ENCODE measurements at regions of chr3 and their contacts with region 1.

Region 1: DNA sequence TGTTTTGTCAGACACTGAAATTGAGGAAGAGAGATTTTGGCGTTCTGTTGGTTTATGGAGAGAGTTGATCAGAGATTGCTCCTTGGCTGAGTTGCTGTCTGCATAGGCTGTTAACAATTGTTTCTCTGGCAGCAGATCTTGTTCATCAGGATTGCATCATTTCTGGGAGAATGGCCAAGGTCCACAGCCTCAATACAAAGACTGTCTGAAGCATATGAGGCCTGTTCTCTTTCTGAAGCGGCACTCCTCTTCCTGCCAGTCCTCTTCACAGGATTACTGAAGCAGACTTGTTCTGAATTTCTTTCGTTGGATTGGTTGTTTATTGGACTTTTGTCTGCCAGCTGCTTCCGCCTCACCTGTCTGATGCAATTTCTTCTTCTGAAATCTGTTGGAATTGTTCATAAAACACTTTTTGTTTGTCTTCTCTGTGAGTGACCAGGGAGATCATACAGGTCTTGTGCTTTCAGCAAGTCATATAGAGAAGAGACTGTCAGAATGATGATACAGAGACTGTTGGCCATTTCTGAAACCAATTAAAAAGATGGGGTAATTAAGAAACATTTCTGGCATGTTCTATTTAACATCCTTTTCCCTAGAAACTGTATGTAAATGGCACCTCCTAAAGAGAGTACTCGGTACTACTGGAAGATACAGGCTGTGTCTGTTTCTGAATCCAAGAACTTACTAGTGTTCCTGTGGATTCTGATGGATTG is 25.5 kb downstream of the SETD5 start:
- DNase-seq: peak; percentile 25 to 50 (median 46)
- H3K4me3 ChIP-seq: no peak overlapping the region
- H3K4me3 Mint-ChIP-seq: no peak overlapping the region
- H3K27ac ChIP-seq: peak overlapping the region in 1 of 2 donors; percentile 73
- H3K27ac Mint-ChIP-seq: peak overlapping the region; percentile 70 to 89 (median 76)
- H3K4me1 ChIP-seq: peaks cover 6 to 10% of the 10 kb centered on the region in 2 donors
- H3K4me1 Mint-ChIP-seq: peaks cover 14% of the 10 kb centered on the region
- H3K27me3 ChIP-seq: no peaks in the 10 kb centered on the region
- H3K27me3 Mint-ChIP-seq: no peaks in the 10 kb centered on the region
- CTCF ChIP-seq: peak; percentile 76

Region 2: DNA sequence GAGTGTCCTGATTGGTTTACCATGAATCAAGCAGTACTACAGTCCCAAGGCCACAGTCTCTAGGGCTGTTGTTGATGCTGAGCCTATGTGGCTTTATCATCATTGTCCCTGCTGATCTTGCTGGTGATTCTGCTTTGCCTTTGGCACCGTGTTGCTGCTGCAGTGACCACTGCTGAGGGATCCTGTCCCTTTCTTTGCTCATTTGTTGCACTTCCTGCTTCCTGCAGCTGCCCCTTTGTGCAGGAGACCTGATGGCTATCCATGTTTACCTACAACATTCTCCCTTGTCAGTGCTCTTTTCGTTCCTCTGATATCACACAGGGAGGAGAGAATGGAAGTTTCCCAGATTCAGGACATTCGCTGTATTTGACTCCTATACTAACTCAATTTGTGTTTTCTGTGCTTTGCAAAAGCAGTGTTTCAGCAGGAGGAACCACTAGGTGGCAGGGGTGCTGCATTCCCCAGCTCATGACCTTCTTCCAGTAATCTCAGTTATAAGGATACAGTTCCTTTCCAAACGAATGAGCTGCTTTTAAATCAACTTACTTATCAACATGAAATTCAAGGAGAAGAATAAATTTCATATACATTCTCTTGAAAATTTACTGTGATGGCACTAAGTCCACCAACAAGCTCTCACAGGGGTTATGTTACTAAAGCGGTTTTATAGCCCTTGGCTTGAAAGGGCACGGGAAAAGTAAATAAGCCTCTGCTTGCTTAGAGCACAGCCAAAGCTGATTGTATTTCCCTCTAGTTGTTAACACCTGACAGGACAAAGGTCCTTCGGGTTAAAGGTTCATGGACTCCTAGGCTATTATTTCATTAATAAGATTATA is 69.7 kb before region 1 on chr3:
- intact Hi-C with region 1: loop called (anchors 2 to 5 kb)
- DNase-seq: peak; percentile 51 to 72 (median 58)
- H3K4me3 ChIP-seq: no peak overlapping the region
- H3K4me3 Mint-ChIP-seq: peak overlapping the region in 1 of 2 donors; percentile 56
- H3K27ac ChIP-seq: no peak overlapping the region
- H3K27ac Mint-ChIP-seq: no peak overlapping the region
- H3K4me1 ChIP-seq: peaks cover 12 to 13% of the 10 kb centered on the region in 2 donors
- H3K4me1 Mint-ChIP-seq: peaks cover 21% of the 10 kb centered on the region
- H3K27me3 ChIP-seq: no peaks in the 10 kb centered on the region
- H3K27me3 Mint-ChIP-seq: peaks cover 0 to 1% (median 1%) of the 10 kb centered on the region in 3 donors
- CTCF ChIP-seq: peak; percentile 92

Region 3: GRCh38 chr3:9396700-9397521 is 26.0 kb before region 1 on chr3:
- intact Hi-C with region 1: loop called in 1 of 2 experiments (anchors 2 kb)
- DNase-seq: peak; percentile 96 to 98 (median 96)
- H3K4me3 ChIP-seq: peak overlapping the region; percentile 49 to 86 (median 75)
- H3K4me3 Mint-ChIP-seq: peak overlapping the region; percentile 91 to 92
- H3K27ac ChIP-seq: peak overlapping the region; percentile 96 to 99
- H3K27ac Mint-ChIP-seq: peak overlapping the region; percentile 98 to 100 (median 99)
- H3K4me1 ChIP-seq: peaks cover 27 to 60% of the 10 kb centered on the region in 2 donors
- H3K4me1 Mint-ChIP-seq: peaks cover 59% of the 10 kb centered on the region
- H3K27me3 ChIP-seq: no peaks in the 10 kb centered on the region
- H3K27me3 Mint-ChIP-seq: peaks cover 0 to 1% (median 0%) of the 10 kb centered on the region in 3 donors
- CTCF ChIP-seq: no peak

Region 4: GRCh38 chr3:9638155-9638554 is 215.3 kb after region 1 on chr3:
- intact Hi-C with region 1: no loop called
- DNase-seq: no peak
- H3K4me3 ChIP-seq: no peak overlapping the region
- H3K4me3 Mint-ChIP-seq: no peak overlapping the region
- H3K27ac ChIP-seq: no peak overlapping the region
- H3K27ac Mint-ChIP-seq: peak overlapping the region in 1 of 7 donors; percentile 58
- H3K4me1 ChIP-seq: peaks cover 4 to 11% of the 10 kb centered on the region in 2 donors
- H3K4me1 Mint-ChIP-seq: peaks cover 11% of the 10 kb centered on the region
- H3K27me3 ChIP-seq: peaks cover 0 to 4% of the 10 kb centered on the region in 2 donors
- H3K27me3 Mint-ChIP-seq: peaks cover 9 to 20% (median 14%) of the 10 kb centered on the region in 3 donors
- CTCF ChIP-seq: no peak